ENCODE measurements at regions of chr4 and their contacts with region 1.

Region 1: GRCh38 chr4:75895744-75896314 is 6.4 kb downstream of the PPEF2 start:
- DNase-seq: peak; percentile 8
- ATAC-seq: peak; percentile 73
- H3K4me3 Mint-ChIP-seq: no peak overlapping the region
- H3K27ac Mint-ChIP-seq: no peak overlapping the region
- H3K4me1 Mint-ChIP-seq: no peaks in the 10 kb centered on the region
- H3K27me3 Mint-ChIP-seq: peaks cover 2% of the 10 kb centered on the region
- CTCF ChIP-seq: peak; percentile 82

Region 2: GRCh38 chr4:75908555-75908954 is 12.7 kb after region 1 on chr4:
- CTCF ChIA-PET with region 1: interaction called, 71 read pairs
- POLR2A ChIA-PET with region 1: interaction called, 3 read pairs
- intact Hi-C with region 1: no loop called
- DNase-seq: no peak
- ATAC-seq: no peak
- H3K4me3 Mint-ChIP-seq: no peak overlapping the region
- H3K27ac Mint-ChIP-seq: no peak overlapping the region
- H3K4me1 Mint-ChIP-seq: no peaks in the 10 kb centered on the region
- H3K27me3 Mint-ChIP-seq: no peaks in the 10 kb centered on the region
- CTCF ChIP-seq: no peak

Region 3: GRCh38 chr4:75916091-75916661 is 20.3 kb after region 1 on chr4:
- CTCF ChIA-PET with region 1: interaction called, 71 read pairs
- POLR2A ChIA-PET with region 1: no interaction called
- intact Hi-C with region 1: no loop called
- DNase-seq: peak; percentile 18
- ATAC-seq: peak; percentile 84
- H3K4me3 Mint-ChIP-seq: no peak overlapping the region
- H3K27ac Mint-ChIP-seq: no peak overlapping the region
- H3K4me1 Mint-ChIP-seq: no peaks in the 10 kb centered on the region
- H3K27me3 Mint-ChIP-seq: no peaks in the 10 kb centered on the region
- CTCF ChIP-seq: peak; percentile 76

Region 4: GRCh38 chr4:76067652-76068286 is 171.9 kb after region 1 on chr4:
- CTCF ChIA-PET with region 1: interaction called, 4 read pairs
- POLR2A ChIA-PET with region 1: no interaction called
- intact Hi-C with region 1: loop called (anchors 10 kb)
- DNase-seq: peak; percentile 87
- ATAC-seq: peak; percentile 87
- H3K4me3 Mint-ChIP-seq: no peak overlapping the region
- H3K27ac Mint-ChIP-seq: no peak overlapping the region
- H3K4me1 Mint-ChIP-seq: no peaks in the 10 kb centered on the region
- H3K27me3 Mint-ChIP-seq: peaks cover 1% of the 10 kb centered on the region
- CTCF ChIP-seq: peak; percentile 74